Naive thymus-derived CD4-positive, alpha-beta T cell (primary cell): ENCODE measurements at regions of chr5 and their contacts with region 1.

Region 1: GRCh38 chr5:59039296-59040023 is 456.6 kb downstream of the RAB3C start:
- DNase-seq: peak; percentile 81 to 94 (median 93)
- ATAC-seq: peak; percentile 87
- H3K4me3 ChIP-seq: peak overlapping the region; percentile 51
- H3K4me3 Mint-ChIP-seq: peak overlapping the region; percentile 83 to 98 (median 96)
- H3K27ac ChIP-seq: peak overlapping the region; percentile 86
- H3K27ac Mint-ChIP-seq: peak overlapping the region; percentile 97 to 100 (median 99)
- H3K4me1 ChIP-seq: peaks cover 16 to 33% of the 10 kb centered on the region in 2 donors
- H3K4me1 Mint-ChIP-seq: peaks cover 30 to 62% (median 56%) of the 10 kb centered on the region in 7 donors
- H3K27me3 ChIP-seq: no peaks in the 10 kb centered on the region
- H3K27me3 Mint-ChIP-seq: no peaks in the 10 kb centered on the region

Region 2: GRCh38 chr5:59007460-59008063 is 31.9 kb before region 1 on chr5:
- CTCF ChIA-PET with region 1: no interaction called
- POLR2A ChIA-PET with region 1: no interaction called
- intact Hi-C with region 1: loop called in 1 of 2 experiments (anchors 2 kb)
- DNase-seq: peak in 4 of 9 donors; percentile 12 to 40 (median 29)
- ATAC-seq: no peak
- H3K4me3 ChIP-seq: no peak overlapping the region
- H3K4me3 Mint-ChIP-seq: no peak overlapping the region
- H3K27ac ChIP-seq: no peak overlapping the region
- H3K27ac Mint-ChIP-seq: peak overlapping the region in 1 of 9 donors; percentile 7
- H3K4me1 ChIP-seq: peaks cover 0 to 6% of the 10 kb centered on the region in 2 donors
- H3K4me1 Mint-ChIP-seq: peaks cover 25 to 79% (median 55%) of the 10 kb centered on the region in 7 donors
- H3K27me3 ChIP-seq: no peaks in the 10 kb centered on the region
- H3K27me3 Mint-ChIP-seq: no peaks in the 10 kb centered on the region

Region 3: DNA sequence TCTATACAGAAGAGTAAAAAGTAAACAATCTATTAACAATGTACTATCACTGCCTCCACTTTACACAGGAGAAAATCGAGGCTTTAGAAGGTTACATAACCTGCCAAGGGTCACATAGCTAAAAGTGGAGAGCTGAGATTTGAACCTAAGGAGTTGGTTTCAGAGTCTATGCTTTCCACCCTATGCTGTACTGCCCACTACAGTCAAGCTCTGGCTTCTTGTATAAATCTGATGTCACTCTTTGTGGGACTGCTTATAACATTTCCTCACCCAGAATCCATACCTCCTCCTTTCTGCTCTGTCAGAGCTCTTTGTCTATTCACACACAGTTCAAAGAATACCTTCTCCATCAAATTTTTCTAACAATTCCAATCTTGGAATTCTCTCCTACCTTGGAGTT is 46.6 kb after region 1 on chr5:
- CTCF ChIA-PET with region 1: no interaction called
- POLR2A ChIA-PET with region 1: no interaction called
- intact Hi-C with region 1: loop called in 1 of 2 experiments (anchors 5 kb)
- DNase-seq: peak in 1 of 9 donors; percentile 17
- ATAC-seq: no peak
- H3K4me3 ChIP-seq: no peak overlapping the region
- H3K4me3 Mint-ChIP-seq: no peak overlapping the region
- H3K27ac ChIP-seq: no peak overlapping the region
- H3K27ac Mint-ChIP-seq: peak overlapping the region in 2 of 9 donors; percentile 0 to 27
- H3K4me1 ChIP-seq: no peaks in the 10 kb centered on the region
- H3K4me1 Mint-ChIP-seq: peaks cover 0 to 17% (median 0%) of the 10 kb centered on the region in 7 donors
- H3K27me3 ChIP-seq: peaks cover 0 to 3% of the 10 kb centered on the region in 2 donors
- H3K27me3 Mint-ChIP-seq: peaks cover 0 to 33% (median 0%) of the 10 kb centered on the region in 5 donors

Region 4: DNA sequence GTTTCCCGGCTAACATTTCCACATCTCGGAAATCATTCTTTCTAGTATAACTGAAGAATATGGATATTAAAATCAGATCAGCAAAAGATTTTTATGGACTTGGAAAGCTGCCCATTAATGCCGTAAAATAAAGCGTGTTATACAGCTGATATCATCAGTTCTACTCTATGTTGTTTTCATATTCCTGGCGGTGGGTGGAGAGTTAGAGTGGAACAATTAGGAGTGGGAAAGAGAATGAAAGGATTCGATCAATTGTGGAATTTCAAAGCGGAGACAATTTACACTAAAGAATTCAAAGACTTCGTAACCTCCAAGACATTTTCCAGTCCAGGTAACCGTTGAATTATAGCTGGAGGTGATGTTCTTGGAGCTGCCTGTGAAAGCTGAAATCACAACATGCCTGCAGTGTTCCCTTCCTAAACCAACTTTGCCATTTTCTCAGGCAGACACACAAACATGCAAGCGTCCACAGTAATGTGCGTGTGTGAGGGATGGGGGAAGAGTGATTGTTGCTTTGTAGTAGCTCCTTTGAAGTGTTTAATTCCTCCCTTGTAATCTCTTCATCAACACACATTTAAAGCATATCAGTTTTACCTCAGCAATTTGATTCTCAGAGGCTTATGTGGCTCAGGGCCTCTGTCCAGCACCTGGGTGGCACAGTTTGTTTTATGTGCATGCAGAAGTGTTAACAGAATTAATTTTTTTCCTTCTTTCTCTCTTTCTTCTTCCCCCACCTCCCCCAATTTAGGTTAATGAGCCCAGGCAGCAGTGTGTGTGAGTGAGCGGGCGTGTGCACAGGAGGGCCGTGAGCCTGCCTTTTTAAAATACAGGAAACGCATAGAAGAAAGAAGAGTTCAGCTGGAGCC is 87.5 kb after region 1 on chr5:
- CTCF ChIA-PET with region 1: interaction called, 30 read pairs
- POLR2A ChIA-PET with region 1: interaction called, 47 read pairs
- intact Hi-C with region 1: loop called (anchors 1 kb)
- DNase-seq: peak in 1 of 9 donors; percentile 17
- ATAC-seq: peak; percentile 9
- H3K4me3 ChIP-seq: peak overlapping the region; percentile 46
- H3K4me3 Mint-ChIP-seq: no peak overlapping the region
- H3K27ac ChIP-seq: peak overlapping the region; percentile 84
- H3K27ac Mint-ChIP-seq: no peak overlapping the region
- H3K4me1 ChIP-seq: peaks cover 58 to 59% of the 10 kb centered on the region in 2 donors
- H3K4me1 Mint-ChIP-seq: peaks cover 0 to 20% (median 7%) of the 10 kb centered on the region in 7 donors
- H3K27me3 ChIP-seq: no peaks in the 10 kb centered on the region
- H3K27me3 Mint-ChIP-seq: no peaks in the 10 kb centered on the region

Region 5: GRCh38 chr5:59143926-59144333 is 104.5 kb after region 1 on chr5:
- CTCF ChIA-PET with region 1: interaction called, 5 read pairs
- POLR2A ChIA-PET with region 1: interaction called, 10 read pairs
- intact Hi-C with region 1: no loop called
- DNase-seq: no peak
- ATAC-seq: no peak
- H3K4me3 ChIP-seq: no peak overlapping the region
- H3K4me3 Mint-ChIP-seq: no peak overlapping the region
- H3K27ac ChIP-seq: no peak overlapping the region
- H3K27ac Mint-ChIP-seq: no peak overlapping the region
- H3K4me1 ChIP-seq: no peaks in the 10 kb centered on the region
- H3K4me1 Mint-ChIP-seq: peaks cover 0 to 40% (median 0%) of the 10 kb centered on the region in 7 donors
- H3K27me3 ChIP-seq: no peaks in the 10 kb centered on the region
- H3K27me3 Mint-ChIP-seq: peaks cover 0 to 4% (median 0%) of the 10 kb centered on the region in 5 donors

Region 6: DNA sequence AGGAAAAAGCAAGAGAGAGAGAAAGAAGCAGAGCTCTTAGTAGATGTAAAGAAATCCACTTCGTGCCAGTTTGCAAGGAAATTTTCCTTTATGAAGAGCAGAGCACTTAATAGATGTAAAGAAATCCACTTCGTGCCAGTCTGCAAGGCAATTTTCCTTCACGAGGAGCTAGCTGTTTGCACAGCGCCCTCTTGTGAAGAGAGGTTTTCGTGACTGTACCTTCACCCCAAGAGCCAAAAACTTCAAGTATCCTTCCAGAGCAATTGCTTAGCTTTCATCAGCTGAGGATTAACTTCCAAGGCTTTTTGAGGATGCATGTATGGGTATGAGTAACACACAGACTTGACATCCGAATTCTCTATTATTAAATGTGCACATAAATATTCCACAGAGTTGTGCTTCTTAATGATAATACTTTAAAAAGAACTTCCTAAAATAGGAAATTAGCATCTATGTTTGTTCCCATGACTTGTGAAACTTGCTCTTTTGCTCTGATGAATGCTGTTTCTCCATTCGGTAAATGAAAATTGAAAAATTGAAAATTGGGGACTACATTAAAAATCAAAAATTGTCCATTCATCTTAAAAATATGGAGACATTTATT is 328.4 kb after region 1 on chr5:
- CTCF ChIA-PET with region 1: no interaction called
- POLR2A ChIA-PET with region 1: no interaction called
- intact Hi-C with region 1: loop called in 1 of 2 experiments (anchors 5 kb)
- DNase-seq: peak in 8 of 9 donors; percentile 1 to 47 (median 30)
- ATAC-seq: peak; percentile 60
- H3K4me3 ChIP-seq: no peak overlapping the region
- H3K4me3 Mint-ChIP-seq: peak overlapping the region in 1 of 10 donors; percentile 24
- H3K27ac ChIP-seq: no peak overlapping the region
- H3K27ac Mint-ChIP-seq: no peak overlapping the region
- H3K4me1 ChIP-seq: no peaks in the 10 kb centered on the region
- H3K4me1 Mint-ChIP-seq: peaks cover 0 to 5% (median 0%) of the 10 kb centered on the region in 7 donors
- H3K27me3 ChIP-seq: no peaks in the 10 kb centered on the region
- H3K27me3 Mint-ChIP-seq: peaks cover 0 to 32% (median 4%) of the 10 kb centered on the region in 5 donors